ENCODE measurements at regions of chr1 and their contacts with region 1.

Region 1: GRCh38 chr1:60281360-60281932 is 207.9 kb upstream of the C1orf87 start:
- ATAC-seq: peak; percentile 95 to 98 (median 97)
- H3K4me3 ChIP-seq: no peak overlapping the region
- H3K27ac ChIP-seq: no peak overlapping the region
- H3K4me1 ChIP-seq: peaks cover 9 to 19% of the 10 kb centered on the region in 2 donors

Region 2: DNA sequence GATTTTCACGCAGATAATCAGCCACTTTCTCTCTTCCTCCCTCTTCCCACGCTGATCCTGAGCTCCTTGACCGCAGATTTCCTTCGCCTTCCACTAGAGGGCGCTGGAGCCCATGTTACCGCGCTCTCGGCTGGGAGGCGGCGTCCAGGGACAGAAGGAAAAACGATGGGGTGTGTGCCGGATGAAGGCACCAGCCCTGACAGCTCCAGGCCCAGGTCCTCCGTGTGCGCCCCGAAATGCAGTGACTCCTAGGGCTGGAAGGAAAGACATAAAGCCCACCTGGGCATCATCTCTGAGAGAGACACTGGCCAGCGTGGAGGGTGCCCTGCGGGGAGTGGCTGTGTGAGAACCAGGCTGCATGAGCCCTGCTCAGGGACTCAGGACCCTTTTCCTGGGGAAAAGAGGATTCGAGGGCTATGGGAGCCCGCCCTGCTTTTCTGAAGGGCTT is 310.0 kb before region 1 on chr1:
- in situ Hi-C with region 1: loop called in 1 of 9 experiments (anchors 10 kb)
- ATAC-seq: peak; percentile 82 to 96 (median 94)
- H3K4me3 ChIP-seq: peak overlapping the region in 1 of 5 donors; percentile 9
- H3K27ac ChIP-seq: no peak overlapping the region
- H3K4me1 ChIP-seq: peaks cover 2 to 18% of the 10 kb centered on the region in 2 donors

Region 3: DNA sequence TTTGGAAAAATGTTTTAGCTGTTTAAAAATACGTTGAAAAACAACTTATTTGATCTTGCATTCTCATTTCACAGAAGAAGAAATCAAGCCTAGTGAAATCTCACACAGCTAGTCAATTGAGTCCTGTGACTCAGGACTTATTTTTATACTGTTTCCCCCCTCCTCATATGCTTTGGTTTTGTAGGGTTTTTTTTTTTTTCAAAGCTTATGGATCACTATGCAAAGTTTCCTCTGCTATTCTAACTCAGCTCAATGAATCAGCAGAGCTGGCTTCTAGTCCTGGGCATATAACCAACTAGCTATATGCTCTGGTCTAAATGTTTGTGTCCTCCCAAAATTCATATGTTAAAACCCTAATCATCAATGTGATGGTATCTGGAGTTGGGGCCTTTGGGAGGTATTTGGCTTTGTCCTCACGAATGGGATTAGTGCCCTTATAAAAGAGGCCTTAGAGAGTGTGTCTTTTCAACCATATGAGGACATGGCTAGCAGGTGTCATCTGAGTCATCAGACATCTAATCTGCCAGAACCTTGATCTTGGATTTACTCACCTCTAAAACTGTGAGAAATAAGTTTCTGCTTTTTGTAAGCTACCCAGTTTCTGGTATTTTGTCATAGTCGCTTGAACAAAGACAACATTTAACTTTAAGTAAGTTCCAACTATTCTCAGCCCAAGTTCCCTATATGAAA is 109.3 kb after region 1 on chr1:
- in situ Hi-C with region 1: loop called in 1 of 9 experiments (anchors 25 kb)
- ATAC-seq: no peak
- H3K4me3 ChIP-seq: no peak overlapping the region
- H3K27ac ChIP-seq: no peak overlapping the region
- H3K4me1 ChIP-seq: no peaks in the 10 kb centered on the region

Region 4: GRCh38 chr1:60564916-60565750 is 283.7 kb after region 1 on chr1:
- in situ Hi-C with region 1: no loop called
- ATAC-seq: peak in 6 of 8 experiments; percentile 21 to 70 (median 42)
- H3K4me3 ChIP-seq: no peak overlapping the region
- H3K27ac ChIP-seq: no peak overlapping the region
- H3K4me1 ChIP-seq: peaks cover 10 to 27% of the 10 kb centered on the region in 2 donors

Region 5: DNA sequence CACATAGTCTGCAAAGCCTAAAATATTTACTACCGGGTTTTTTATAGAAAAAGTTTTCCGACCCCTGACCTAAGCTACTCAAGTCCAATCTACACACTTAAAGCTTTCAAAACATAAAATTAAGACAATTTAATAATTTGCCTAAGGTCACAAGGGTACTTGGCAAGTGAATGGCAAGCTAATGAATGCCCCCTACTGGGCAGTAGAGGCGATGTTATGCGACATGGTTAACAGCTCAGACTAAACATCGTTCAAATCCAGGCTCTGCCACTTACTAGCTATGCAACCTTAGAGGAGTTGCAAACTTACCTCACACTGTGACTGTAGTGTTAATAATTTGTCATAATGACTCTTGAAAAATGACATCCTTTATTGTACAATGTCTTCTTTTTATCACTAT is 483.8 kb after region 1 on chr1:
- in situ Hi-C with region 1: loop called in 1 of 9 experiments (anchors 25 kb)
- ATAC-seq: peak in 4 of 8 experiments; percentile 25 to 48 (median 37)
- H3K4me3 ChIP-seq: no peak overlapping the region
- H3K27ac ChIP-seq: no peak overlapping the region
- H3K4me1 ChIP-seq: no peaks in the 10 kb centered on the region

Measured in motor neuron (in vitro differentiated cells).